Tibial artery (tissue), 4 donors: ENCODE measurements at regions of chr14 and their contacts with region 1.

Region 1: DNA sequence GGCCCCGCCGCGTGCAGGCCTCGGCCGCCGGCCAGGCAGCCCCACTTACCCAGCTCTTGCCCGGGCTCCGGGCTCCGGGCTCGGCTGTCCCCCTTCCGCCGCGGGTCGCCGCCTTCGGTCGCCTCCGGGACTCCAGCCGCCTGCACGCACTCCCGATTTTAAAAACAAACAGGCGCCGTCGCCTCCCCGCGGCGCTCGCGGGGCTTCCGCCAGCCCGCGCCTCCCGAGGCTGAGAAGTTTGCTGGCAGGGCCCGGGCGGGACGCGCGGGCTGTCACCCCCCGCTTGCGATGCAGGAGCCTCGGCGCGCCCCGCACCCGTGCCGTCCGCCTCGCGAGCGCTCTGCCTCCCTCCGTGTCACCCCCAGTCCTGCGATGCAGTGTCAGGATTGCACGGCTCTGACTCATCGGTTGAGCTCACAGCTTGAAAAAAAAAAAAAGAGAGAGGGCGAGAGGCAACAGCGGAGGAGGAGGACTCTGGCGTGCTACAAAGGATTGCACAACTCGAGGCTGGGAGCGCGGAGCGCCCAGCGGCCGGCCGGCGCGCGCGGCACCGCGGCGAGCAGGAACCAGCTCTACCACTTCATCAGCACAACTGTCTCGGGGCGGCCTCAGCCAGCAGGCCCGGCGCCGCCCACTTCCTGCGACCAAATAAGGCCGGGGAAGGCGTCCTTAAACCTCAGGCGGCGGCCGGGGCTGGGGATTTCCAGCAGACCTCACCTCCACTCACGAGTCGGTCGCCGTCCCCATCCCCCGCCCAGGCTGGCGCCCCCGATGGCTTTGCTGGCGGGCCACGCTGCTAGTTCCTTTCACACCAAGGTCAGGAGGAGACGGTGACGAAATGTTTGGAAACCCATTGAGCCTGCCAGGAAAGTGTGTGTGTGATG is 45.8 kb upstream of the PNMA1 start:
- DNase-seq: peak; percentile 98 to 99
- H3K4me3 ChIP-seq: peak overlapping the region; percentile 80 to 86
- H3K27ac ChIP-seq: peak overlapping the region; percentile 95 to 96
- H3K4me1 ChIP-seq: peaks cover 0 to 87% (median 75%) of the 10 kb centered on the region in 4 donors
- H3K27me3 ChIP-seq: no peaks in the 10 kb centered on the region
- CTCF ChIP-seq: peak; percentile 21 to 52

Region 2: DNA sequence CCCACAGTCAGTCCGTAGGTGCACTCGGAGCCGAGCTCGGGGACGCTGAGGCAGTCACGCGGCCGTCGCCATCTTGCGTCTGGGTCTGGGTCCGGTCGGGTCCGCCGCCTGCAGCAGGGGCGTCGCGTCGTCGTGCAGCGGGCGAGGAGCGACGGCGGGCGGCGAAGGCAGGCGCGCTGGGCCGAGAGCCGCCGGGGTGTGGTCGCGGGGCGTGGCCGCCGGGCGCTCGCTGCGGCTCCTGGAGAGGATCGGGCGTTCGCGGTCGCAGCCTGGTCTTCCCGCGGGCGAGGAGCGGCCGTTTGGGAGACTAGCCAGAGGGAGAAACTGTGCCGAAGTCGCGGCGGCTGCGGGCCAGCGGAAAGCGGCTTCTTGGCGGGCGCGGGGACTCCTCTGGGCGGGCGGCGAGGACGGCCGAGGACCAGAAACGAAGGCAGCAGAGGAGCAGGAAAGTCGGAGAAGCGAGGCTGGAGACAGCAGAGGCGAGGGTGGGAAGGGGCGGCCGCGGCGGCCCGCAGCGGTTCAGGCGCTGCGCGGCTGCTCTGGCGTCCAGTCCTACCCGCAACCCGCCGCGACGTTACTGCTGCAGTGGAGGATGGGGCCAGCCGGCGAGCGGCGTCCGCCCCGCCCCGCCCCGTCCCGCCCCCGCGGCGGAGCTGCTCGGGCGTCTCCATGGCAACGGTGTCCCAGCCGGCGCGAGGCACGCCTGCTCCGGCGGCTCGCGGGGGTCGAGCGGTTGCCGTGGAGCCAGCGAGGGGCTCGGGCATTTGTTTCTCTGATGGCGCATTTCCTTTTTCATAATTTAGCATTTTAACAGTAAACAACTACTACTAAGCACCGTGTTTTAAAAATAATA is 45.9 kb before region 1 on chr14 and contains the start of gene PNMA1:
- intact Hi-C with region 1: no loop called
- DNase-seq: peak; percentile 89 to 95
- H3K4me3 ChIP-seq: peak within 1 kb of the TSS; percentile 91 to 98
- H3K27ac ChIP-seq: peak within 1 kb of the TSS; percentile 97 to 99
- H3K4me1 ChIP-seq: peaks cover 0 to 43% (median 30%) of the 10 kb centered on the region in 4 donors
- H3K27me3 ChIP-seq: no peaks in the 10 kb centered on the region
- CTCF ChIP-seq: no peak

Region 3: DNA sequence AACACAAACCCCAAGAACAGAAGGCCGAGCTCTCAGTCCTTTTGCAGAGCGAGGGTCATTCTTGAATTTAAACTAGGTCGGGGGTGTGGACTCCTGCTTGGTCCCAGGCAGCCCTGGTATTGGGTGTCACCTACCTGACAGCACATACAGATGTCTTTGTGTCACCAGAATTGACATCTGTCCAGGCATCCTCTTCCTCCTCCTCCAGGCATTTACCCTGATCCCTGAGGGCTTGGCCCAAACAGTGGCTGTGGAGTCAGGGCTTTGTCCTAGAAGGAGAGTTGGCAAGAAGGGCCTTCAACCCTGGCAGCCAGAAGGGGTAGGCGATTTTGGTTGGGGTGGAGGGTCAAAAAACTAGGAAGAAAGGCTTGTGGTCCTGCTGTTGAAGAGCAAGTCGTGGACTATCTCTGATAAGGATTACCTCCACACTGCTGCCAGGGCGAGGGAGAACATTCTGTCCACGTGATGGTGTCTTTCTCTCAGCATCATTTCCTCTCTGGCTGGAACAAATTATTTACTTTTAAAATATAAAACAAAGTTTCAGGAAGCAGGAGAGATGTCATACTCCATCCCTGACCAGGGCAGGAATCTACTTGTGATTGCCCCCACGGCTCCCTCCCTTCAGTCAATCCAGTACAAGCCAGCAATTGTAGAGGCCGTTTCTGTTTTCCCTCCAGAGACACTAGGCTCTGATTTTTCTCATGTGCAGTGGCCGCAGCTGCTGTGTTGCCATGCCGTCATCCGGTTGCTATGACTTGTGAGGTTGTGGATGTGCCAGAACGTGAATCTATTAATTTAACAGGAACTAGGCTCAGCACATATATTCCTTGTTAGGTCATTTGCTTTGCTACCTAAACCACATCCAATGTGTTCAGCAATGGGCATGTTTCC is 30.0 kb after region 1 on chr14:
- intact Hi-C with region 1: loop called (anchors 5 kb)
- DNase-seq: peak; percentile 77 to 90
- H3K4me3 ChIP-seq: no peak overlapping the region
- H3K27ac ChIP-seq: peak overlapping the region; percentile 95 to 96
- H3K4me1 ChIP-seq: peaks cover 0 to 49% (median 43%) of the 10 kb centered on the region in 4 donors
- H3K27me3 ChIP-seq: no peaks in the 10 kb centered on the region
- CTCF ChIP-seq: no peak

Region 4: DNA sequence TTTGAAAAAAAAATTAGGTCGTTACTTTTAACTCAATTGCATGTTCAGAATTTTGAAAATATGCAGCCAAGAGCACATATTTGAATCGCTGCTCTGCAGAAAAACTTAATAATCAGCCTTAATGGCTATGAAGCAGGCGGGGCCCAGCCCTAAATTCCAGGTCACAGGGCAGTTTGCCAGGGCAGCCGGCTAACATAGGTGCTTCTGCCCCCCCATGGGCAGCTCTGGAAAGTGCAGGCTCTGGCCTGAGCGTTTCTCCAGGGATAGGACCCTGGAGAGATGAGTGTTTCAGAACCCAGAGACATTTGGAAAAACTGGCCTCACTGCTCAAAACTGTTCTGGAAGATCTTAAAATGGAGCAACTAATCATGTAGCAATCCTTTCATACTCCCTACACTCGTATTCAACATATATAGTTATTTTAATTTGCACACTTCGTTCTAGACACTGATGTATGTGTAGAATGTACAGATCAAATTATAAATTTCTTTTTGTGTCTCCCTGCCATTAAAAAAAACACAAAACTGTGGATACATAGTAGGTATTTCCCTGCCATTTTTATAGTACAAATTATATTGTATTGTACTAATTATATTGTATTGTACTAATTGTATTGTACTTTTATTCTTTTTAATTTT is 65.7 kb after region 1 on chr14:
- intact Hi-C with region 1: loop called (anchors 10 kb)
- DNase-seq: peak; percentile 92 to 95
- H3K4me3 ChIP-seq: no peak overlapping the region
- H3K27ac ChIP-seq: peak overlapping the region in 1 of 2 donors; percentile 24
- H3K4me1 ChIP-seq: peaks cover 0 to 11% (median 0%) of the 10 kb centered on the region in 4 donors
- H3K27me3 ChIP-seq: no peaks in the 10 kb centered on the region
- CTCF ChIP-seq: peak; percentile 93 to 94